Natural killer cell (primary cell): ENCODE measurements at regions of chr12 and their contacts with region 1.

Region 1: DNA sequence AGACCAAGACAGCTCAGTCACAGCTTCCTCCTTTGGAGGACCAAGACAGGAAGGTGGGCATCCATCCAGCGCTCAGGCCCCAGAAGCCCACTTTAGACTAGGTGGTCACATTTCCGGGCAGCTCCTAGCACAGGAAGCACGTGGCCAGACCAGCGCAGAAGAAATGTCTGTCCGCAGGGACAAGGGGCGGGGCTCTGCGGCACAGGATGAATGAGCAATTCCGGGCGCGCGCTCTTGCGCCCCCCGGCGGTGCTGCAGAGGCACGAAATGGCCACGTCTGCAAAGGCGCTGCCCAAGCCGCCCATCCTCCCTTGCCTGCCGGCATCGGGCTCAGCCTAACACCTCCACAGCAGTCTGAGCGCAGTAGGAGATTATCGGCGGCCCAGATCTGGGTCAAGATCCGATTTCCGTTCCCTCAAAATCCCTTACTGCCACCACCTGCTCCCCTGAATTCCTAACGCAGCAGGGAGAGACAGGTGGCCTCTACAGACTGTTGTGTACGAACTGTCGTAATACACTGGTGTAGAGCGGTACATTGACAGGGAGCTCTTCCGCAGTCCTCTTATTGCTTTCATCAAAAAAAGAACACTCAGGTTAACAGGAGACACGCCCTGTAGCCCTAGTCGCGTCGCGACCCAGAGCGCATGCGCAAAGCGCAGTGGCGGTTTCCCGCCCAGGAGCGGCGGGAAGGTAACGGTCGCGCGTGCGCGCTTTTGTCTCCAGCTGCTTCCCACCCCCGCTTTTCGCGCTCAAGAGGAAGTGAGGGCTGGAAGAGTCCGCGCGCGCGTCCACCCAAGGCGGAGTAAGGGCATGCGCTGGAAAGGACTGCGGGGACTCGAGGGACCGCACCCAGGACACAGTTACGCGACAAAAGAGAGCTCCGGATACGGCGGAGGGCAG is 794 bp downstream of the TUBA1B start:
- DNase-seq: peak; percentile 90 to 98
- ATAC-seq: peak; percentile 72 to 90 (median 77)
- H3K4me3 ChIP-seq: peak overlapping the region; percentile 81
- H3K4me3 Mint-ChIP-seq: peak overlapping the region; percentile 96
- H3K27ac ChIP-seq: peak overlapping the region; percentile 86
- H3K27ac Mint-ChIP-seq: peak overlapping the region; percentile 95 to 97
- H3K4me1 ChIP-seq: peaks cover 15% of the 10 kb centered on the region
- H3K4me1 Mint-ChIP-seq: peaks cover 34 to 37% of the 10 kb centered on the region in 2 donors
- H3K27me3 ChIP-seq: no peaks in the 10 kb centered on the region
- H3K27me3 Mint-ChIP-seq: no peaks in the 10 kb centered on the region
- CTCF ChIP-seq: peak; percentile 93

Region 2: GRCh38 chr12:49018261-49019119 is 111.9 kb before region 1 on chr12 and contains the start of gene PRKAG1:
- intact Hi-C with region 1: loop called (anchors 2 kb)
- DNase-seq: peak; percentile 97 to 98
- ATAC-seq: peak; percentile 81 to 94 (median 86)
- H3K4me3 ChIP-seq: peak within 1 kb of the TSS; percentile 71
- H3K4me3 Mint-ChIP-seq: peak within 1 kb of the TSS; percentile 92
- H3K27ac ChIP-seq: peak within 1 kb of the TSS; percentile 92
- H3K27ac Mint-ChIP-seq: peak within 1 kb of the TSS; percentile 97 to 98
- H3K4me1 ChIP-seq: peaks cover 24% of the 10 kb centered on the region
- H3K4me1 Mint-ChIP-seq: peaks cover 23 to 55% of the 10 kb centered on the region in 2 donors
- H3K27me3 ChIP-seq: no peaks in the 10 kb centered on the region
- H3K27me3 Mint-ChIP-seq: no peaks in the 10 kb centered on the region
- CTCF ChIP-seq: peak; percentile 56
- total RNA-seq, gene PRKAG1: 76.4 to 100 (median 81.1) TPM

Region 3: GRCh38 chr12:49069507-49070346 is 60.7 kb before region 1 on chr12 and contains the start of gene RHEBL1:
- intact Hi-C with region 1: loop called (anchors 2 kb)
- DNase-seq: peak; percentile 97 to 99
- ATAC-seq: peak; percentile 97 to 100 (median 99)
- H3K4me3 ChIP-seq: peak within 1 kb of the TSS; percentile 83
- H3K4me3 Mint-ChIP-seq: peak within 1 kb of the TSS; percentile 99
- H3K27ac ChIP-seq: peak within 1 kb of the TSS; percentile 84
- H3K27ac Mint-ChIP-seq: peak within 1 kb of the TSS; percentile 97 to 98
- H3K4me1 ChIP-seq: peaks cover 15% of the 10 kb centered on the region
- H3K4me1 Mint-ChIP-seq: peaks cover 11 to 18% of the 10 kb centered on the region in 2 donors
- H3K27me3 ChIP-seq: no peaks in the 10 kb centered on the region
- H3K27me3 Mint-ChIP-seq: no peaks in the 10 kb centered on the region
- CTCF ChIP-seq: no peak
- total RNA-seq, gene RHEBL1: 6.3 to 11.6 (median 11.1) TPM

Region 4: GRCh38 chr12:49088190-49088931 is 42.0 kb before region 1 on chr12:
- intact Hi-C with region 1: loop called (anchors 1 kb)
- DNase-seq: peak; percentile 62 to 92
- ATAC-seq: peak; percentile 88 to 94 (median 93)
- H3K4me3 ChIP-seq: no peak overlapping the region
- H3K4me3 Mint-ChIP-seq: peak overlapping the region; percentile 36
- H3K27ac ChIP-seq: no peak overlapping the region
- H3K27ac Mint-ChIP-seq: no peak overlapping the region
- H3K4me1 ChIP-seq: peaks cover 48% of the 10 kb centered on the region
- H3K4me1 Mint-ChIP-seq: peaks cover 13 to 38% of the 10 kb centered on the region in 2 donors
- H3K27me3 ChIP-seq: peaks cover 42% of the 10 kb centered on the region
- H3K27me3 Mint-ChIP-seq: peaks cover 10 to 40% of the 10 kb centered on the region in 2 donors
- CTCF ChIP-seq: peak; percentile 88

Region 5: DNA sequence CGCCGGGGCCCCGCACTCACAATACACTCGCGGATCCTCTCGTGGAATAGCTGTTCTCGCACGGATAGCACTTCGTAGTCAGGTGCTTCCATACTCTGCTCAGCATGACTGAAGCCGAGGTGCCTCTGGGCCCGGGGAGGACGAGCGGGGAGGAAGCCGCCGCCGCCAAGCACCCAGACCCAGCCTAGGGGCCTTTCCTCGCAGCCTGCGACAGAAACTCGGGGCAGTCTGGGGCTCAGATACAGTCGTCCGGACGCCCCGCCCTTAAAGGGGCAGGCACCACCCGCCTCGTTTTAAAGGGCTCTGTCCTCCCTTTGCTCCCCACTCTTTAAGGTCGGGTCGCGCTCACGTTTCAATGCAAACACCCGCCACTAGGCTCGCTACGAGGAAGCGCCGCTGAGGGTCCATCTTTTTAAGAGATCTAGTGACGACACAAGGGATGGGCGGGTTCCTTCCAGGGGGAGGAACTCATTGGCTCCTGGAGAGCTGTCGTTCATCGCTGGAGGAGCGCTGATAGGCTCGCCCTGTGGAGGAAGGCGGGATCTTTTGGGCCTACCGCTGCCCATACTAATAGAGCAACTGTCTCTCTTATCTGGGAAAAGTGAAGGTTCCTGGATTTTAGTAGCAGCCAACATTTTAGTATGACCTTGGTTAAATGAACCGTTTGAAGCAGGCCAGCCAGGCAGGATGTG is 19.8 kb before region 1 on chr12 and contains the start of gene LMBR1L:
- intact Hi-C with region 1: loop called (anchors 1 kb)
- DNase-seq: peak; percentile 94 to 99
- ATAC-seq: peak; percentile 91 to 98 (median 91)
- H3K4me3 ChIP-seq: peak within 1 kb of the TSS; percentile 96
- H3K4me3 Mint-ChIP-seq: peak within 1 kb of the TSS; percentile 100
- H3K27ac ChIP-seq: peak within 1 kb of the TSS; percentile 94
- H3K27ac Mint-ChIP-seq: peak within 1 kb of the TSS; percentile 98
- H3K4me1 ChIP-seq: peaks cover 24% of the 10 kb centered on the region
- H3K4me1 Mint-ChIP-seq: peaks cover 28 to 42% of the 10 kb centered on the region in 2 donors
- H3K27me3 ChIP-seq: no peaks in the 10 kb centered on the region
- H3K27me3 Mint-ChIP-seq: no peaks in the 10 kb centered on the region
- CTCF ChIP-seq: peak; percentile 44
- total RNA-seq, gene LMBR1L: 262 to 294 (median 271) TPM

Region 6: GRCh38 chr12:49188914-49189367 is 58.5 kb after region 1 on chr12 and contains the start of gene TUBA1A:
- intact Hi-C with region 1: loop called (anchors 1 kb)
- DNase-seq: peak; percentile 89 to 99
- ATAC-seq: peak; percentile 85 to 95 (median 88)
- H3K4me3 ChIP-seq: peak within 1 kb of the TSS; percentile 91
- H3K4me3 Mint-ChIP-seq: peak within 1 kb of the TSS; percentile 97
- H3K27ac ChIP-seq: peak within 1 kb of the TSS; percentile 98
- H3K27ac Mint-ChIP-seq: peak within 1 kb of the TSS; percentile 96
- H3K4me1 ChIP-seq: peaks cover 10% of the 10 kb centered on the region
- H3K4me1 Mint-ChIP-seq: peaks cover 21 to 25% of the 10 kb centered on the region in 2 donors
- H3K27me3 ChIP-seq: no peaks in the 10 kb centered on the region
- H3K27me3 Mint-ChIP-seq: no peaks in the 10 kb centered on the region
- CTCF ChIP-seq: no peak
- total RNA-seq, gene TUBA1A: 129 to 403 (median 182) TPM

Region 7: GRCh38 chr12:49233842-49234535 is 103.6 kb after region 1 on chr12:
- intact Hi-C with region 1: loop called (anchors 2 kb)
- DNase-seq: peak; percentile 20 to 33
- ATAC-seq: peak in 1 of 3 donors; percentile 63
- H3K4me3 ChIP-seq: peak overlapping the region; percentile 2
- H3K4me3 Mint-ChIP-seq: peak overlapping the region; percentile 68
- H3K27ac ChIP-seq: peak overlapping the region; percentile 79
- H3K27ac Mint-ChIP-seq: peak overlapping the region; percentile 84 to 86
- H3K4me1 ChIP-seq: peaks cover 19% of the 10 kb centered on the region
- H3K4me1 Mint-ChIP-seq: peaks cover 0 to 13% of the 10 kb centered on the region in 2 donors
- H3K27me3 ChIP-seq: no peaks in the 10 kb centered on the region
- H3K27me3 Mint-ChIP-seq: no peaks in the 10 kb centered on the region
- CTCF ChIP-seq: no peak